SK-N-SH (cell line): ENCODE measurements at regions of chr17 and their contacts with region 1.

Region 1: GRCh38 chr17:79087428-79088143 is 13.0 kb downstream of the ENGASE start:
- DNase-seq: peak; percentile 97
- H3K4me3 ChIP-seq: no peak overlapping the region; a peak in 1 of 4 replicates
- H3K27ac ChIP-seq: no peak overlapping the region
- H3K4me1 ChIP-seq: peaks cover 0 to 9% of the 10 kb centered on the region in 2 experiments; a peak in 1 of 4 replicates
- H3K27me3 ChIP-seq: no peaks in the 10 kb centered on the region
- CTCF ChIP-seq: peak; percentile 97
- EP300 ChIP-seq: no peak
- RAD21 ChIP-seq: peak; percentile 96

Region 2: DNA sequence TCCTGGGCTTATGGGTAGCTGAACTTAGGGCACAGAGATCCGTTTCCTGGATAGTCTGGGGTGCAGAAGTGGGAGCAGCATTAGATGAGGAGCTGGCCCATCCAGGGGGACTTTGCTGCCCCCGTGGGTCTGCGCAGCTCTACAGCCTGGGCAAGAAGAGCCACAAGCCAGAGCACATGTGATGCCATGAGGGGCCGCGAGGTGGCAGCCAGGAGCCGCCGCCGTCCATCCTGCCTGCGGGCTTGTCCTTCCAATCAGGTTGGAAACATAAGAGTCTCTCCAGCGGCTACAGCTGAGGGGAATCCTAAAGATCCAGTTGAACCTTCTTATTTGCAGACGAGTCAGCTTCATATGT is 41.8 kb before region 1 on chr17:
- CTCF ChIA-PET with region 1: interaction called, 529 read pairs
- POLR2A ChIA-PET with region 1: no interaction called
- DNase-seq: peak; percentile 93
- H3K4me3 ChIP-seq: no peak overlapping the region
- H3K27ac ChIP-seq: no peak overlapping the region
- H3K4me1 ChIP-seq: peaks cover 0 to 23% of the 10 kb centered on the region in 2 experiments; a peak in 2 of 4 replicates
- H3K27me3 ChIP-seq: no peaks in the 10 kb centered on the region
- CTCF ChIP-seq: peak; percentile 98
- EP300 ChIP-seq: no peak
- RAD21 ChIP-seq: peak; percentile 92

Region 3: DNA sequence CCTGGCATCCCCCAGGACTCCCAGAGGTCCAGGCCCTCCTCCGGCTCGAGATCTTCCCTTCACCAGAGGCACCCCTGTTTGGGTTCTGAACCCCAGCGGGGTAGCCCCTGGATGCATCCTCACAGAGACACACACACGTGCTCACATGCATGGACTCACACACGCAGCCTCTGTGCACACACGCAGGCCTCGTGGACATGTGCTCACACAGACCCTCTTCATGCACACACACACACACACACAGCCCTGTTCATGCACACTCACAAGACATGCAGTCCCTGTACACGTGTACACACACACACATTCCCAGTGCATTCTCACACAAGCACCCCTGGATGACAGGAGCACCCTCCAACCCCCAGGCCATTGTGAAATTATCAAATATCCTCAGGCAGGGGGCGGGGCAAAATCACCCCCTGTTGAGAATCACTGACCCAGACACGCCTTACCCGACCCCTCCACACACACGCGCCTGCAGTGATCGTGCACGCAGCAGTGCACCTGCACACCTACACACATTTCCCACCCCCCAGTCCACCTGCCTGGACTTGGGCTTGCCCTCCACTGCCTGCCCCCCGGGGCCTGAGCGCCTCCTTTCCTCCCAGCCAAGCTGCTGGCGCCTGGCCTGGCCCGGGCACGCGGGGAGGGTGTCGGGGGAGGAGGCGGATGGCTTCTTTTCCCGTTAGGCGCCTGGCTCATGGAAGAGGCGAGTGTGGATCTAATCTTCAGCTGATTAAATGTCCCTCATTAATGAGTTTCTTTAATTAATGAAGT is 49.6 kb after region 1 on chr17:
- CTCF ChIA-PET with region 1: interaction called, 22 read pairs
- POLR2A ChIA-PET with region 1: no interaction called
- DNase-seq: no peak
- H3K4me3 ChIP-seq: no peak overlapping the region
- H3K27ac ChIP-seq: no peak overlapping the region
- H3K4me1 ChIP-seq: peaks cover 0 to 23% of the 10 kb centered on the region in 2 experiments; a peak in 1 of 4 replicates
- H3K27me3 ChIP-seq: peaks cover 50% of the 10 kb centered on the region
- CTCF ChIP-seq: no peak
- EP300 ChIP-seq: no peak
- RAD21 ChIP-seq: no peak

Region 4: DNA sequence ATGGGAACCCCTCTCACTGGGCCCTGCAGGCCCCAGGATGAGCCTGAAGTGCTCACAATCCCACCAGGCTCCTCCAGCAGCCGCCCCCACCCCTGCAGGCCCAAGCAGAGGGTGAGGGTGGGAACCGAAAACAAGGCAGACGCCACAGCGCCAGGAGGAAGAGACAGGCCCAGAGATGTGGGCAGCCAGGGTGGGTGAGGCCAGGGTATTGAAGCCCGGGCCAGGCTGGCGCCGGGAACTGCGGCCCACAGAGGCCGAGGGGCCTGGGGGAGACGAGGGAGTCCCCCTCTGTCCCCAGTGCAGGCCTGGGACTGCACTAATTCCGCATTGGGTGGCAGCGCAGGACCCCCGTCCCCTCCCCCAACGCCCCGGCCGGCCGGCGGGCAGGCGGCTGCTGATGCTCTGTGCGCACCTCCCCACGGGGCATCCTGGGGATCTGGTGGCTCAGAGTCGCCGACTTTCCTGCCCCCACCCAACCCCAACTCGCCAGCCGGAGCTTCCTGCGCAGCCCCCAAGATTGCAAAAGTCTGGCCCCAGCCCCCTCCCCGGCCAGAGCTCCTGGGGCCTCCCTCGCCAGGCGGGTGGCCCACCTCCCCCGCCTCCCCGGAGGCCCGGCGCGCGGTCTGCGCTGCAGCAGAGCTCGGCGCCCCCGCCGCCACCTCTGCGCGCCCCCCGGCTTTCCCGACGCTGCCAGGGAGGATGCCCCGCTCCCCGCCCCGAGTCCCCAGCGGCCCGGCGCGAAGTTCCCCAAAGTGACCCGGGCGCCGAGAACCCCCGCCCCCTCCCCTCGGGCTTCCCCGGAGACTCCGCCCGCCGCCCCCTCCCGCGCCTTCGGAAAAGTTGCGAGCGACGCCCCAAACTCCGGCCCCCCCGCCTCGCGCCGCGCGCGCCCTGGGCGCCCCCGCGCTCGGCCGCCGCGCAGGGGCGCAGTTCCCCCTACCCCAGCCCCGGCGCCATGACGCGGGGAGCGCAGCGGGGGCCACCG is 94.9 kb after region 1 on chr17:
- CTCF ChIA-PET with region 1: interaction called, 120 read pairs
- POLR2A ChIA-PET with region 1: no interaction called
- DNase-seq: no peak
- H3K4me3 ChIP-seq: no peak overlapping the region
- H3K27ac ChIP-seq: no peak overlapping the region
- H3K4me1 ChIP-seq: peaks cover 0 to 3% of the 10 kb centered on the region in 2 experiments; a peak in 1 of 4 replicates
- H3K27me3 ChIP-seq: peaks cover 84% of the 10 kb centered on the region
- CTCF ChIP-seq: no peak
- EP300 ChIP-seq: no peak
- RAD21 ChIP-seq: no peak

Region 5: GRCh38 chr17:79272666-79273219 is 185.2 kb after region 1 on chr17:
- CTCF ChIA-PET with region 1: interaction called, 11 read pairs
- POLR2A ChIA-PET with region 1: no interaction called
- DNase-seq: peak; percentile 85
- H3K4me3 ChIP-seq: no peak overlapping the region
- H3K27ac ChIP-seq: peak overlapping the region in 1 of 2 experiments; percentile 76; a peak in 2 of 4 replicates
- H3K4me1 ChIP-seq: peaks cover 0 to 47% of the 10 kb centered on the region in 2 experiments; a peak in 1 of 4 replicates
- H3K27me3 ChIP-seq: 0 out of 2 replicates have a peak, but pooled peaks cover 9% of the 10 kb centered on the region
- CTCF ChIP-seq: no peak
- EP300 ChIP-seq: no peak
- RAD21 ChIP-seq: no peak; the same call in 1 of the 2 replicates